ENCODE measurements at regions of chr5 and their contacts with region 1.

Region 1: GRCh38 chr5:64784451-64785025 is 15.8 kb downstream of the CWC27 start:
- DNase-seq: peak; percentile 14 to 72
- ATAC-seq: peak in 7 of 8 donors; percentile 38 to 73 (median 58)
- H3K4me3 ChIP-seq: no peak overlapping the region
- H3K27ac ChIP-seq: no peak overlapping the region
- H3K4me1 ChIP-seq: no peaks in the 10 kb centered on the region
- H3K27me3 ChIP-seq: no peaks in the 10 kb centered on the region
- CTCF ChIP-seq: peak; percentile 61 to 93 (median 88)

Region 2: GRCh38 chr5:64147849-64148441 is 636.6 kb before region 1 on chr5:
- intact Hi-C with region 1: loop called in 1 of 10 experiments (anchors 10 kb)
- DNase-seq: peak; percentile 44 to 63
- ATAC-seq: peak; percentile 39 to 81 (median 65)
- H3K4me3 ChIP-seq: no peak overlapping the region
- H3K27ac ChIP-seq: no peak overlapping the region
- H3K4me1 ChIP-seq: peaks cover 3 to 28% (median 11%) of the 10 kb centered on the region in 9 donors
- H3K27me3 ChIP-seq: no peaks in the 10 kb centered on the region
- CTCF ChIP-seq: peak; percentile 40 to 88 (median 79)

Region 3: DNA sequence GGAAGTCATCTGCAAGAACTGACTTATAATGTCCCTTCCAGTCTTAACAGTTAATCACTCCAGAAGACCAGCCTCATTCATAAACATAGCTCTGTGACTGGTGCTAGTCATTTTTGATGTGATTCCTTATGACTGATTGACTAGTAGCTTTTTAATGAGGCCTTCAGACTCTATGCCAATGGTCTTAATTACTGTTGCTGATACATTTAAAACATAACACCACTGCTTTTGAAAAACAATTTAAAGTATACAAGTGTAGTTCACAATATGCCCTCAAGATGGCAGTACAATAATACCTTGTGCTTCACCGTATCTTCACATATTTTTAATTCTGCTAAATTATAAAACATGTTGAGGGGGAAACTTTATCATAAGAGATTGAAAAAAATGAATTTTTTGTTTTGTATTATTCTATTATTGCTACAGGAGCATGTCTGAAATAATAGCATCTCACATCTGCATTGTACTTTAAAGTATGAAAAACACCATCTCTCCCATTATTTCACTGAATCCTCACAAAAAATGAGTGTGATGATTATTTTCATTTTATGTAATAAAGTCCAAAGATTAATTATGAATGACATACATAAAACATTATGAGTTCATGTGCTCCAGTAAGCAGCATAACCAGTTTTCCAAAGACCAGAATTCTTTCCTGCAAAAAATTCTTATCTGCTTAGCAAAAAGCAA is 149.4 kb before region 1 on chr5:
- intact Hi-C with region 1: loop called (anchors 1 to 5 kb)
- DNase-seq: no peak
- ATAC-seq: no peak
- H3K4me3 ChIP-seq: no peak overlapping the region
- H3K27ac ChIP-seq: no peak overlapping the region
- H3K4me1 ChIP-seq: peaks cover 0 to 6% (median 0%) of the 10 kb centered on the region in 9 donors
- H3K27me3 ChIP-seq: peaks cover 0 to 36% (median 0%) of the 10 kb centered on the region in 7 donors
- CTCF ChIP-seq: peak; percentile 60 to 86 (median 83)

Region 4: GRCh38 chr5:65209341-65209740 is 424.8 kb after region 1 on chr5:
- intact Hi-C with region 1: no loop called
- DNase-seq: no peak
- ATAC-seq: no peak
- H3K4me3 ChIP-seq: no peak overlapping the region
- H3K27ac ChIP-seq: peak overlapping the region in 1 of 10 donors; percentile 5
- H3K4me1 ChIP-seq: no peaks in the 10 kb centered on the region
- H3K27me3 ChIP-seq: no peaks in the 10 kb centered on the region
- CTCF ChIP-seq: no peak